Calu3 (cell line): ENCODE measurements at regions of chr11 and their contacts with region 1.

Region 1: DNA sequence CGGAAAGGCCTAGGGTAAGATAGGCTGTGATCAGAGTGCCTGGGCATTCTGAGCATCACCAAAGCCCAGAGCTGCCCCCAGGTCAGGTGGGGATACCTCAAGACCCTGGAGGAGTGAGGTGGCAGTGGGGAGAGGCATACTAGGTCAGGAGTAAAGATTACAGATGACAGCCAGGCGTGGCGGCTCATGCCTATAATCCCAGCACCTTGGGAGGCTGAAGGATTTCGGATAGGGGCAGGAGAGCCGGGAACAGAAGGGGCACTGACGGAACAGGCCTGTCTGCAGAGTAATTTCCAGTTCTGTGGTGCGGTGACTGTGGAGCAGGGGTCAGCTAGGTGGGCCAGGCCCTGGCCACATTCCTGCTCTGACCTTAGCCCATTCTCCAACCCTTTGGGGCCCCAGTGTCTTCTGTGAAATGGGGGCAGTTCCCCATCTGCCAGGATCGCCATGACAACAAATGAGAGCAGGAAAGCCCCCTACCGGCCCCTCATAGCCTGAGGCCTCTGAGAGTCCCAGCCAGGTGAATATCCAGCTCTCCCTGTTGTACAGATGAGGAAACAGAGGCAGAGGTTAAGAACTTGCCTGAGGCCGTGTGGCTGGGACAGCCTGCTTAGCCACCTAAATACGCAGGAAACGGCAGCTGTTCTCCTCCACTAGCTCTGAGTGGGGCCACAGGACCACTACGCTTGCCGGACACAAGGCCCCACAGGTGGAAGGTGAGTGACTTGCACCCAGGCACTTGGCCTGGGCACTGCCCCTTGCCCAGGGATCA is 9.2 kb downstream of the BAD start:
- DNase-seq: no peak
- H3K4me3 Mint-ChIP-seq: no peak overlapping the region
- H3K27ac Mint-ChIP-seq: no peak overlapping the region
- H3K4me1 Mint-ChIP-seq: no peaks in the 10 kb centered on the region
- H3K27me3 Mint-ChIP-seq: no peaks in the 10 kb centered on the region
- CTCF ChIP-seq: no peak

Region 2: DNA sequence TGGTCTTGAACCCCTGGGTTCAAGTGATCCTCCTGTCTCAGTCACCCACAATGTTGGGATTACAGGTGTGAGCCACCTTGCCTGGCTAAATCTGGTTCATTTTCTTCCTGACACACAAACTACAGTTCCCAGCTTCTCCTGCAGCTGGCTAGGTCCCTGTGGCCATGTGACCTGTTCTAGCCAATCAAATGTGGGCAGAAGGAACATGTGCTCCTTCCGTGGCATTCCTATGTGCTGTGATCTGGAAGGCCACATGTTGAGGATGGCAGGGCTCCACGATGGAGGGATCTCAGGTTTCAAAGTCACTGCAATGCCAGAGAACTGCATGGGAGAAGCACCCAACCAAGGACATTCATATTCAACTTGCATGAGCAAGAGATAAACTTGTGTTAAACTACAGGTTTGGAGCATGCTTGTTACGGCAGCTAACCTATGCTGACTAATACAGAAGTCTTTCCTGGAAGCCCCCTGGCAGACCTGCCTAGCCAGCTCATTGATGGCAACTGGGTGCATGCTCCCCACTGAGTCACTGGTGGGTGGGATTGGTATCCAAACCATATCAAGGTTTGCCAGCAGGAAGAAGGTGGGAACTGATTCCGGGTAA is 169.7 kb after region 1 on chr11:
- CTCF ChIA-PET with region 1: no interaction called
- intact Hi-C with region 1: no loop called
- DNase-seq: peak; percentile 45
- H3K4me3 Mint-ChIP-seq: no peak overlapping the region
- H3K27ac Mint-ChIP-seq: no peak overlapping the region
- H3K4me1 Mint-ChIP-seq: peaks cover 10% of the 10 kb centered on the region
- H3K27me3 Mint-ChIP-seq: peaks cover 88% of the 10 kb centered on the region
- CTCF ChIP-seq: no peak

Region 3: GRCh38 chr11:64457416-64458375 is 182.5 kb after region 1 on chr11:
- CTCF ChIA-PET with region 1: interaction called, 10 read pairs
- intact Hi-C with region 1: no loop called
- DNase-seq: no peak
- H3K4me3 Mint-ChIP-seq: no peak overlapping the region
- H3K27ac Mint-ChIP-seq: no peak overlapping the region
- H3K4me1 Mint-ChIP-seq: no peaks in the 10 kb centered on the region
- H3K27me3 Mint-ChIP-seq: peaks cover 95% of the 10 kb centered on the region
- CTCF ChIP-seq: no peak

Region 4: DNA sequence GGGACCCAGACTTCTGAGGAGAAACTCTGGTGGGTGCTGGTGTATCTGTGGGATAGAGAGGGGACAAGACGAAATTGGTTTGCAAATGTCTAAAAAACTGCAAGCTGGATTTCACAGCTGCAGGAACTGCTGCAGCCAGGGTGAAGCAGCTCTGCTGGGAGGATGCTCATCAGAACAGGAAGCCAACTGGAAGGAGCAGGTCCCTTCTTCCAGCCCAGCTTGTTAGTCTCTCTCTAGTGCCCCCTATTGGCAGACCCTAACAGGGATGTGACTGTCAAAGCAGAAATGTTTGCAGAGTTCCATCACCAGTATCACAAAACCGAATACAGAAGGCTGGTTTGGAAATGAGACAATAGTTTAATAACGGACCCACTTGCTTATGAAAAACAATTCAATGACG is 241.0 kb after region 1 on chr11:
- CTCF ChIA-PET with region 1: no interaction called
- intact Hi-C with region 1: no loop called
- DNase-seq: no peak
- H3K4me3 Mint-ChIP-seq: no peak overlapping the region
- H3K27ac Mint-ChIP-seq: no peak overlapping the region
- H3K4me1 Mint-ChIP-seq: no peaks in the 10 kb centered on the region
- H3K27me3 Mint-ChIP-seq: peaks cover 75% of the 10 kb centered on the region
- CTCF ChIP-seq: no peak

Region 5: DNA sequence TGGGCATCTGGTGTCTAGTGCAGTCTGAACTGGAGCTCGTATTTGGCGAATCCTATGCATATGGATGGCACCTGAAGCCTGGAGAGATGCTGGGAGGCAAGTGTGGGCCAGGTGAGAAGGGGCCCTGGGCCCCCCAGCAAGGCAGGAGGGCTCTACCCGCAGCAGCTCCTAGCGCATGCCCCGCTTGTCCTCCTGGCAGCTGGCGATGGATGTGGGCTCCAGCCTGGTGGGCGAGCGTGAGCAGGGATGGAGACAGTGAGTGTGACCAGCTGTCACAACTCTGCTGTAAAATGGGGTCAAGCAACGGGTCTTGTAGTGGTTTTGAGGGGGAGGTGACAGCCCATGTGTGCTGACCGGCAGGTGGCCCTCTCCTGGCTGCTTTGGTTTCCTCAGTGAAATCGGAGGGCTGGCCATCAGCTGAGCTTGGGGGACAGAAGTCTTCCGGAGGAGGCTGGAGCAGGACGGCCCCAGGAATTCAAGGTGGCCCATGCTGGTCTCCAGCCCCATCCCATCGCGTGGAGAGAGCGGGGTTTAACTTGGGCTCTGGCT is 1123.2 kb after region 1 on chr11:
- CTCF ChIA-PET with region 1: interaction called, 12 read pairs
- intact Hi-C with region 1: no loop called
- DNase-seq: no peak
- H3K4me3 Mint-ChIP-seq: no peak overlapping the region
- H3K27ac Mint-ChIP-seq: no peak overlapping the region
- H3K4me1 Mint-ChIP-seq: no peaks in the 10 kb centered on the region
- H3K27me3 Mint-ChIP-seq: no peaks in the 10 kb centered on the region
- CTCF ChIP-seq: no peak